MCF 10A (cell line): ENCODE measurements at regions of chr17 and their contacts with region 1.

Region 1: GRCh38 chr17:42720996-42721583 is 23.8 kb downstream of the EZH1 start:
- DNase-seq: peak; percentile 71
- H3K4me3 Mint-ChIP-seq: no peak overlapping the region
- H3K27ac Mint-ChIP-seq: no peak overlapping the region
- H3K4me1 Mint-ChIP-seq: no peaks in the 10 kb centered on the region
- H3K27me3 Mint-ChIP-seq: no peaks in the 10 kb centered on the region
- CTCF ChIP-seq: peak; percentile 62

Region 2: DNA sequence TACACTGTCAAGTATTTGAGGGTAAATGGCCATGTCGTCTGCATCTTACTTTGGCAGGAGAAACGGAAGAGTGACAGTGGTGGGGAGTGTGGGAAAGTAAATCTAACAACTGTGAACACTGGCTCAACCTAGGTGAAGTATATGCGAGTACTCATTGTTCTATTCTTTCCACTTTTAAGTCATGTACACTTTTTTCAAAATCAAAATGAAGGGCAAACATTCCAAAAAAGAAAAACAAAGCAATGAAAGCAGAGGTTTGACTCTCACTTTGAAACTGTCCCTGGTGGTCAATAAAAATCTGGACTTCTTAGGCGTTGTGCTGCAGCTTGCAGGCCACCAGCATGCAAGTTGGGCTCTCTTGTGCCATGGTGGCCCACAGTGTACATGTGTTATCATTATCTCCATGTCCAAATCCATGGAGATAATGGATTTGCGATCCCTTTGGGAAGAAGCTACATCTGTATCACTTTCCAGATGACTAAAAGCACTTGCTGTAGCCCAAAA is 477.5 kb before region 1 on chr17:
- CTCF ChIA-PET with region 1: no interaction called
- POLR2A ChIA-PET with region 1: no interaction called
- intact Hi-C with region 1: no loop called
- DNase-seq: no peak
- H3K4me3 Mint-ChIP-seq: no peak overlapping the region
- H3K27ac Mint-ChIP-seq: no peak overlapping the region
- H3K4me1 Mint-ChIP-seq: no peaks in the 10 kb centered on the region
- H3K27me3 Mint-ChIP-seq: no peaks in the 10 kb centered on the region
- CTCF ChIP-seq: no peak

Region 3: DNA sequence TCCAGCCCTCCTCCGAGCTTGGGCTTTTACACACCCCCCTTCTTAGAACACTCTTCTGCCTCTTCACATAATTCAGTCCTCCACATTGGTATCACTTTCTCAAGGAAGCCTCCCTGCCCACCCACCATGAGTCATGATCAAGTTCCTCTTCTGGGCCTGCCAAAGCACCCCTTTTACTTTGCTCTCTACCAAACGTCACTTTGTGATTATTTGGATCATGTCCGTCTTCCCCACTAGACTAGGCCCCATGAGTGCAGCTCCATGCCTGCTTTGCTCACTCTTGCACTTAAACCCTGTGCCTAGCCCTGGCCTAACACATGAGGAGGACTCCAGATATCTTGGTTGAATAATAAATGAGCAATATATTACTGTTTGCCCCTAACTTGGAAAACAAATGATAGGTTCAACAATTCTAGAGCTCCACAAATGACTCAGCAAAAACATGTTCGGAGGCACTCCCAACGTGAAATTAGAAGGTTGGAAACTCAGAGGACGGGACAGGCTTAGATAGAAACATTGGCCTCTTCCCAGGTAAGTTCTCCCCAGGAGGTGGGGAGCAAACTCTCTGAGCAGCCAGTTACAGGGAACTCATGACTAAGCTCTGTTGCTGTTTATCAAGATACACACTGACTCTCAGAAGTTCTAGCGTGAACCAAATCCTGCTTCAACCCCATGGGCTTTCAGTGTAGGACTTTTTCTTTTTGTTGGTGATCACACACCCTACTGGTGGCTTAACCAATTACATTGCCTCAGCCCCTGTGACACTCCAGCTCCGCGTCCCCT is 207.8 kb after region 1 on chr17:
- CTCF ChIA-PET with region 1: interaction called, 3 read pairs
- POLR2A ChIA-PET with region 1: no interaction called
- intact Hi-C with region 1: loop called (anchors 1 kb)
- DNase-seq: peak; percentile 84
- H3K4me3 Mint-ChIP-seq: no peak overlapping the region
- H3K27ac Mint-ChIP-seq: peak overlapping the region; percentile 77
- H3K4me1 Mint-ChIP-seq: no peaks in the 10 kb centered on the region
- H3K27me3 Mint-ChIP-seq: peaks cover 5% of the 10 kb centered on the region
- CTCF ChIP-seq: peak; percentile 55